AG04449 (cell line): ENCODE measurements at regions of chr4 and their contacts with region 1.

Region 1: DNA sequence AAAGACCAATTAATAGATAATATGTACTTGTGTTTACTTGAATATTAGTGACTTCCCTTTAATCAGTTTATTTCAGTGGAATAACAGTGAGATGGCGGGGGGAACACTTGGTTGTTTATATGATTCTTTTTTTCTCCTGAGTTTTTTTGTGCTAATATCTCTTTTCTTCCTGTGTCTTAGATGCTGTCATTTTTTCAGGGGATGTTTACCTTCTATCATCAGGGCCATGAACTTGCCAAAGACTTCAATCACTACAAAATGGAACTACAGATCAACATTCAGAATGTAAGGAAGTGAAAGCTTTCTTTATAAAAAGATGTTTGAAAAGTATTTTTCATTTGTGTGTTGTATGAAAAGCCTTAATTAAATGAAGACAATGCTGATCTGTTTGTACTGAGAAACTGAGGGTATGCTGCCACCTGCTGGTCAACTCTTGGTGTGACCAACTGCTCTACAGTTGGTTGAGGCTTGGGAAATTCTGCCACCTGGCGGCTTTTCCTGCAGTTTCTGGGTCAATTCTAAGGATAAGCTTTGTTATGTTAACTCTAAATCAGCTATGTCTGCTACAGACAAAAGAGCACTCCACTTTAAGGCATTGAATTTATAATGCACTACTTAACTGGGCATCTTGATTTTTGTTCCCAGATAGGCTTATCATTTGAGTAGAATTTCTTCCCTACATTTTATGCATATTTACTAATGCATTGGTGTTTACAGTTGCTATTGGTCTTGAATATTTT is 134.8 kb downstream of the ARHGAP10 start:
- DNase-seq: peak; percentile 55
- H3K4me3 ChIP-seq: no peak overlapping the region
- CTCF ChIP-seq: peak; percentile 89

Region 2: DNA sequence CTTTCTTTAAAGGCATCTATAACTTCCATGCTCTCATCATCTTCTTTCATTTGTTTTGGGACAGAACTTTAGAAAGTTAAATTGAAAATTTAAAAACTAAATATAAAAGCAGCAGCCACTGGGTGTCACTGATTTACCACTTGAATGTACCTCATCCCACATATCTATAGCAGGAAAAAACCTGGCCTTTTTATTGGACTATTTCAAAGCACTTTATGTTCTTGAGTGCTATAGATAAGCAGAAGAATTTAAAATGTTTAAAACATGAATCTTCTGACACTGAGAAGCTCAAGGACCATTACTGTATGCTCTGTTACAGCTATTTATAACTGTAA is 755.7 kb before region 1 on chr4:
- CTCF ChIA-PET with region 1: interaction called, 46 read pairs
- POLR2A ChIA-PET with region 1: no interaction called
- DNase-seq: no peak
- H3K4me3 ChIP-seq: no peak overlapping the region
- CTCF ChIP-seq: no peak

Region 3: GRCh38 chr4:147633113-147633512 is 233.6 kb before region 1 on chr4:
- CTCF ChIA-PET with region 1: interaction called, 107 read pairs
- POLR2A ChIA-PET with region 1: no interaction called
- DNase-seq: no peak
- H3K4me3 ChIP-seq: no peak overlapping the region
- CTCF ChIP-seq: no peak

Region 4: GRCh38 chr4:147689067-147689466 is 177.6 kb before region 1 on chr4:
- CTCF ChIA-PET with region 1: interaction called, 77 read pairs
- POLR2A ChIA-PET with region 1: interaction called, 3 read pairs
- DNase-seq: no peak
- H3K4me3 ChIP-seq: no peak overlapping the region
- CTCF ChIP-seq: no peak

Region 5: GRCh38 chr4:147731580-147732517 is 134.9 kb before region 1 on chr4 and contains the start of gene ARHGAP10:
- CTCF ChIA-PET with region 1: interaction called, 78 read pairs
- POLR2A ChIA-PET with region 1: interaction called, 13 read pairs
- DNase-seq: no peak
- H3K4me3 ChIP-seq: peak within 1 kb of the TSS; percentile 80
- CTCF ChIP-seq: no peak

Region 6: GRCh38 chr4:147822128-147822527 is 44.6 kb before region 1 on chr4:
- CTCF ChIA-PET with region 1: interaction called, 15 read pairs
- POLR2A ChIA-PET with region 1: no interaction called
- DNase-seq: no peak
- H3K4me3 ChIP-seq: no peak overlapping the region
- CTCF ChIP-seq: no peak

Region 7: GRCh38 chr4:147879676-147880075 is 13.0 kb after region 1 on chr4:
- CTCF ChIA-PET with region 1: interaction called, 101 read pairs
- POLR2A ChIA-PET with region 1: no interaction called
- DNase-seq: no peak
- H3K4me3 ChIP-seq: no peak overlapping the region
- CTCF ChIP-seq: no peak